ENCODE measurements at regions of chr3 and their contacts with region 1.

Region 1: DNA sequence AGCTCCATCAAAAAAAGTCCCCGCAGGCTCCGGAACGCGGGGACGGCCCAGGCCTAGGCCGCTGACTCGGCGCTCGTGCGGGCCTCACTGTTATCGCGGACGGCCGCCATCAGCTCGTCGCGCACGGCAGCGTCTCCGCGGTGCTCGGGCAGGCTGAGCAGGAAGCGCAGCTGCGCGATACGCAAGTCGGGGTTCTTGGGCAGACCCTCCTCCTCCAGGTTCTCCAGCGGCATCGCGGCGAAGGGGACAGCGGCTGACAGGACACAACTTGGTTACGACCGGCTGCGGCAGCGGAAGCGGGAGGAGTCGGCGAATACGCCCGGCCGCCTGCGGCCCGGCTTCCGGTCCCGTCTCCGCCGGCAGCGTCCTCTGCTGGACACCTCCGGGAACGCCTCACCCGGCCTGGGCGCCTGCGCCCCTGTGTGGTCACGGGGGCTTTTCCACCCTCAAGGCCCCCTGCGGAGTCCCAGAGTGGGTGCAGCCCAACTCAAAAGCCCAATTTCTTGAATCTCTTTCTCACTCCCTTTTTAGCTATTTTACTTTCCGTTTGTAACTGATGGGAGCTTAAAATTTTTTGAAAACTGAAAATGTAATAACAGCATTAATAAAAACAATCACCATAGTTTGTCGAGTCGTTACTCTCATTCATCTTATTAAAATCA is at the start of gene PSMD6:
- DNase-seq: peak; percentile 49
- ATAC-seq: peak; percentile 95
- H3K4me3 ChIP-seq: peak within 1 kb of the TSS; percentile 86
- H3K27ac ChIP-seq: peak within 1 kb of the TSS; percentile 87
- H3K4me1 ChIP-seq: no peaks in the 10 kb centered on the region
- H3K27me3 ChIP-seq: no peaks in the 10 kb centered on the region
- CTCF ChIP-seq: peak; percentile 99 to 100 (median 100); a peak in 5 of 6 replicates
- EP300 ChIP-seq: 0 out of 4 replicates have a peak, but pooled peaks of 1 of the 2 experiments have one; percentile 18
- POLR2A ChIP-seq: peak; percentile 97
- RAD21 ChIP-seq: peak; percentile 28; the same call in 1 of the 2 replicates
- polyA plus RNA-seq, gene PSMD6: 84.3 to 124 TPM

Region 2: GRCh38 chr3:64011685-64012084 is 11.6 kb before region 1 on chr3:
- CTCF ChIA-PET with region 1: interaction called, 23 read pairs
- POLR2A ChIA-PET with region 1: no interaction called
- RAD21 ChIA-PET with region 1: interaction called, 5 read pairs
- SMC1A ChIA-PET with region 1: interaction called, 11 read pairs
- in situ Hi-C with region 1: no loop called
- intact Hi-C with region 1: no loop called
- DNase-seq: no peak
- ATAC-seq: no peak
- H3K4me3 ChIP-seq: no peak overlapping the region
- H3K27ac ChIP-seq: no peak overlapping the region
- H3K4me1 ChIP-seq: peaks cover 6% of the 10 kb centered on the region
- H3K27me3 ChIP-seq: no peaks in the 10 kb centered on the region
- CTCF ChIP-seq: no peak
- EP300 ChIP-seq: no peak
- POLR2A ChIP-seq: no peak
- RAD21 ChIP-seq: no peak

Region 3: DNA sequence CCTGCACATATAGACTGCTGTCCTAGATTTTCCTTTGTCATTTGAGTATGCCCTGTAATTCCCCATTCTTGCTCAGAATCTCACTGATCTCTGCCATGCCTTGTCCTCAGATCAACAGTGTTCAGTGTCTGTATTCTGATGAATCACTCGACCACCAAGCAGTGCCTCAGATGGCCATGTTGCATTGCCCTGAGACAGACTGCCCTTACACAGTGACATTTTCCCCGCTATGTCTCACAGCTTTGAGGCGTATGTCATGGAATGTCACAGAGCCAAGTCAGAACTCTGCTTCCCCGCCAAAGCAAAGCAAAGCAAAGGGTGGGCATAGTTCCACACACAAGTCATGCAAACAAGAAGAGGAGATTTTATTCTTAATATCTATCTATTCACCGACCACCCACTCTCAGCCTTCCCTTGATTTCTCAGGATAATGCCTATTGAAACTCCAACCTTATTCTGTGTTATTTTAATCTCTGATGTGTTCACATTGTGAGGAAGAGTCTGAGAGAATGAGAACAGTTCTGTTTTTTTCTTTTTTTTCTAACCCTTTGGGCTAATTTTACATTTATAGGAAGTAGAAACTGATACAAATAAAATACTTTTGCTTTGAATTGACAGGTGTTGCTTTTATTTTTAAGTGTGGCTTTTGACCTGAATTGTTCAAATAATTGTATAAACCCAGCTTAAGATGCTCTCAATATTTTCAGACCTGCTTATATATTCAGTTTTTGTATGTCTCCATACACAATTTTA is 16.8 kb after region 1 on chr3:
- CTCF ChIA-PET with region 1: interaction called, 12 read pairs
- POLR2A ChIA-PET with region 1: no interaction called
- RAD21 ChIA-PET with region 1: interaction called, 3 read pairs
- SMC1A ChIA-PET with region 1: no interaction called
- in situ Hi-C with region 1: no loop called
- intact Hi-C with region 1: no loop called
- DNase-seq: no peak
- ATAC-seq: no peak
- H3K4me3 ChIP-seq: no peak overlapping the region
- H3K27ac ChIP-seq: no peak overlapping the region
- H3K4me1 ChIP-seq: no peaks in the 10 kb centered on the region
- H3K27me3 ChIP-seq: 0 out of 4 replicates have a peak, but pooled peaks cover 0 to 3% of the 10 kb centered on the region in 2 experiments
- CTCF ChIP-seq: no peak
- EP300 ChIP-seq: no peak
- POLR2A ChIP-seq: no peak
- RAD21 ChIP-seq: no peak

Region 4: GRCh38 chr3:64837126-64837738 is 813.9 kb after region 1 on chr3:
- CTCF ChIA-PET with region 1: no interaction called
- POLR2A ChIA-PET with region 1: no interaction called
- RAD21 ChIA-PET with region 1: no interaction called
- SMC1A ChIA-PET with region 1: no interaction called
- in situ Hi-C with region 1: no loop called
- intact Hi-C with region 1: no loop called
- DNase-seq: no peak
- ATAC-seq: no peak
- H3K4me3 ChIP-seq: no peak overlapping the region
- H3K27ac ChIP-seq: no peak overlapping the region
- H3K4me1 ChIP-seq: no peaks in the 10 kb centered on the region
- H3K27me3 ChIP-seq: no peaks in the 10 kb centered on the region
- CTCF ChIP-seq: no peak
- EP300 ChIP-seq: no peak
- POLR2A ChIP-seq: no peak
- RAD21 ChIP-seq: no peak